Transverse colon (tissue), 4 donors: ENCODE measurements at regions of chr1 and their contacts with region 1.

Region 1: DNA sequence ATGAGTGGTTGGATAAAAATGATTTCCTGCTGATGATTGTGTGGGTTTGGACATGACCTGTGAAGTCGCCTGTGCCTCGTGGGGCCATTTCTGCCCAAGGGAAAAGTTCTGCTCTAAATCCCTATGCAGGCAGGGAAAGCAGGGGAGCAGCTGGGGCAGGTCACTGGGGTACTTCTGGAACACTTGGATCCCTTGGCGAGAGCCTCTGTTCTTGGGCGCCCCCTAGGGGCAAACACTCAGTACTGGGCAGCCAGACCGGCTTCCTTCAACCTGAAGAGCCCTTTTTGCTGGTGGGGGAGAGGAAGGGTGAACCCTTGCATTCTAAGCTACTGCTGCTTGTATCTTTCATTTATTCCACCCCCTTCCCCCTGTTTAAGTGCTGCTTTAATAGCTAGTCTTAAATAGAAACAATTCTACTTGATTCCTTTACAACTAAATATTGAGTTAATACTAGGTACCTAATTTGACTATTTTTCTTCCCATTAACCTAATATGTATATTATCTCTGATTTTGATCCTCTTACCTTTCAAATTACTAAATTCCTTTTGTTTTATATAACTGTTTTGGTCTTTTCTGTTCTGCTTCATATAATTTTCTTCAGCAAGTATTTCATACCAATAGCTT is 5.1 kb upstream of the CLEC20A start:
- DNase-seq: peak; percentile 75
- H3K4me3 ChIP-seq: no peak overlapping the region
- H3K27ac ChIP-seq: no peak overlapping the region
- H3K4me1 ChIP-seq: no peaks in the 10 kb centered on the region
- H3K27me3 ChIP-seq: no peaks in the 10 kb centered on the region
- CTCF ChIP-seq: peak; percentile 68 to 92 (median 85)
- EP300 ChIP-seq: no peak
- POLR2A ChIP-seq: no peak

Region 2: DNA sequence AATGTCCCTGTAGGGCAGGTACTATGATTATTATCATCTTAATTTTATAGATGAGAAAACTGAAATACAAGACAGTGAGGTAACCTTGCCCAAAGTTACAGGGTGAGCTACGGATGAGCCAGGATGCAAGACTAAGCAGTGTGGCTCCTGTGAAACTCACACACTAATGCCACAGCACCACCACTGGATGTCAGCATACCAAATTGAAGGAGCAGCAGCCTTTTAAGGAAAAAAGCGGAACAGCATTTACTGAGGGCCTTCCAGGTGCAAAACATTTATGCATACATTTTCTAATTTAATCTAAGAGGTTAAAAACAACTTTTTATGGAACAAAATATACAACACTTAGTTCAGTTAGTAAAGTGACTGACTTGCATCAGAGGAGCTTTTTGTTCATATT is 573.6 kb before region 1 on chr1:
- in situ Hi-C with region 1: no loop called
- intact Hi-C with region 1: no loop called
- DNase-seq: no peak
- H3K4me3 ChIP-seq: no peak overlapping the region
- H3K27ac ChIP-seq: no peak overlapping the region
- H3K4me1 ChIP-seq: no peaks in the 10 kb centered on the region
- H3K27me3 ChIP-seq: no peaks in the 10 kb centered on the region
- CTCF ChIP-seq: no peak
- EP300 ChIP-seq: no peak
- POLR2A ChIP-seq: no peak

Region 3: DNA sequence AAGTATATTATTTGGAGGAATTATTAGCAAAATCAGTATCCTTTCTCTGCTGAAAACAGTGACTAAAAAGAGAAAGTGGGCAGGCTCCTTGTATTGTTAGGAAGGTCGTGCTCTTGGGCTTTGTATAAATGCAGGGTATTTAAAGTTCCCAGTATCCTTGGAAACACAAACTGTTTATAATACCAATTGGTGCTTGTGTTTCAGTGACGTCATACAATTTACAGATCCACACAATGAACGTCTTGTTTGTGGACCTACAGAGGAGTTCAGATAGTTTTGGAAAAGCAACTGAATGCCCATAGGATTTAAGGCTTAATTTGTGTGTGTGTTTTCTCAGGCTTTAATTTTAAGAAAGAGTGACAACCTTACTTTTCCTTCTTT is 239.7 kb before region 1 on chr1:
- in situ Hi-C with region 1: no loop called
- intact Hi-C with region 1: no loop called
- DNase-seq: no peak
- H3K4me3 ChIP-seq: no peak overlapping the region
- H3K27ac ChIP-seq: no peak overlapping the region
- H3K4me1 ChIP-seq: peaks cover 0 to 13% (median 0%) of the 10 kb centered on the region in 4 donors
- H3K27me3 ChIP-seq: no peaks in the 10 kb centered on the region
- CTCF ChIP-seq: no peak
- EP300 ChIP-seq: no peak
- POLR2A ChIP-seq: no peak

Region 4: DNA sequence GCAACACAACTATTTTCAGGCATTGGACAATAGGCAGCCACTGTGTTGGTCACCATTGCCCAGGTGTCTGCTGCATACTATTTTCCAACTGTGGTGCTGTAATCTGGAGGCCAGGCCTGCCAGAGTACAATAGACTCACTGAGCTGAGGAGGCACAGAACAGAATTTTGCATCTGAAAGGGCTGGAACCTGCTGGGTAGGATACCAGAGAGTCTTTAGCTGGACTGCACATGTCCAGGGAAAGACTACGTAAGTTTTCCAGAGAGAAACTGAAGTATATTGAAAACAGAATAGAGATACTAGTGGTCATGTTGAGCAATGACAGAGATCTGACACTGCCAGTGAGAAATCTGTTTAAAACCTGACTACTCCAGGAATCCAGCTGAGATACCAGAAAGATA is 207.2 kb before region 1 on chr1:
- in situ Hi-C with region 1: loop called in 1 of 4 experiments (anchors 10 kb)
- intact Hi-C with region 1: no loop called
- DNase-seq: no peak
- H3K4me3 ChIP-seq: no peak overlapping the region
- H3K27ac ChIP-seq: no peak overlapping the region
- H3K4me1 ChIP-seq: peaks cover 0 to 2% (median 0%) of the 10 kb centered on the region in 4 donors
- H3K27me3 ChIP-seq: no peaks in the 10 kb centered on the region
- CTCF ChIP-seq: no peak
- EP300 ChIP-seq: no peak
- POLR2A ChIP-seq: no peak

Region 5: GRCh38 chr1:178310685-178311105 is 191.1 kb before region 1 on chr1:
- in situ Hi-C with region 1: loop called in 2 of 4 experiments (anchors 10 kb)
- intact Hi-C with region 1: loop called (anchors 10 kb)
- DNase-seq: no peak
- H3K4me3 ChIP-seq: no peak overlapping the region
- H3K27ac ChIP-seq: no peak overlapping the region
- H3K4me1 ChIP-seq: peaks cover 0 to 12% (median 8%) of the 10 kb centered on the region in 4 donors
- H3K27me3 ChIP-seq: no peaks in the 10 kb centered on the region
- CTCF ChIP-seq: peak; percentile 66 to 81 (median 74)
- EP300 ChIP-seq: no peak
- POLR2A ChIP-seq: no peak

Region 6: GRCh38 chr1:178847396-178847849 is 345.6 kb after region 1 on chr1:
- in situ Hi-C with region 1: no loop called
- intact Hi-C with region 1: no loop called
- DNase-seq: no peak
- H3K4me3 ChIP-seq: no peak overlapping the region
- H3K27ac ChIP-seq: no peak overlapping the region
- H3K4me1 ChIP-seq: peaks cover 0 to 13% (median 0%) of the 10 kb centered on the region in 4 donors
- H3K27me3 ChIP-seq: no peaks in the 10 kb centered on the region
- CTCF ChIP-seq: no peak
- EP300 ChIP-seq: no peak
- POLR2A ChIP-seq: no peak